AG04449 (cell line): ENCODE measurements at regions of chr5 and their contacts with region 1.

Region 1: GRCh38 chr5:114449860-114450421 is 88.1 kb downstream of the KCNN2 start:
- DNase-seq: no peak
- H3K4me3 ChIP-seq: no peak overlapping the region
- CTCF ChIP-seq: peak; percentile 92

Region 2: DNA sequence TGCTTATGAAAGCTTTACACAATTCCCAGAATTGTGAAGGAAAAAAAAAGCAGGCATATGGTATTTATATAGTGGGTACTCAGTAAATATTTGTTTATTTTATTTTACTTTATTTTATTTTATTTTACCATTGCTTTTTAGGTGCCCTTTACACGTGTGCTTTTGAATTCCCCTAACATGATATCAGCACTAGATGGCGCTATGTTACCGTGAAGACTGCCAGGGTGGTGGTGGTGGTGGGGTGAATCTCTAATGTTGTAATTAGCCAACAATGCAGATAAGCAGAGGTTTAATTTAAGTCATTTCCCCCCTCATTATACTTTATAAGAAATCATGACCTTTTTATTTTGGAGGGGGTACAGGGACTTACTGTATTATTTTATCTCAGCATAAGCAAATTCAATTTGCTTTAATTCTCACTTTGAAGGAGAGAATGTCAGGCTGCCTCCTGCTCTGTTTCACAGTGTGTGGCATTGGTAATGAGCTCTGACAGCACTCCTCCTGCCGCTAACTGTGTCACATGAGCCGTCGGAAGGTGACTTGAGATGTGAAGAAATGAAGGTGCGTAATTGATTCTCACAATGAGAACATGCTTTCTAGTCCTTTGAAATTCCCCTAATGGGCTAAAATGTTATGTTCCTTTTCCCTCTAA is 770.9 kb before region 1 on chr5:
- CTCF ChIA-PET with region 1: interaction called, 130 read pairs
- POLR2A ChIA-PET with region 1: no interaction called
- DNase-seq: no peak
- H3K4me3 ChIP-seq: no peak overlapping the region
- CTCF ChIP-seq: peak; percentile 54

Region 3: GRCh38 chr5:114101153-114101552 is 348.8 kb before region 1 on chr5:
- CTCF ChIA-PET with region 1: interaction called, 11 read pairs
- POLR2A ChIA-PET with region 1: no interaction called
- DNase-seq: no peak
- H3K4me3 ChIP-seq: no peak overlapping the region
- CTCF ChIP-seq: peak; percentile 65

Region 4: GRCh38 chr5:114361724-114362196 is 88.2 kb before region 1 on chr5 and contains the start of gene KCNN2:
- CTCF ChIA-PET with region 1: interaction called, 118 read pairs
- POLR2A ChIA-PET with region 1: no interaction called
- DNase-seq: no peak
- H3K4me3 ChIP-seq: peak within 1 kb of the TSS; percentile 65
- CTCF ChIP-seq: no peak